Gastrocnemius medialis (tissue), 4 donors: ENCODE measurements at regions of chr22 and their contacts with region 1.

Region 1: GRCh38 chr22:42662114-42663021 is 13.2 kb upstream of the CYB5R3 start:
- DNase-seq: peak; percentile 56 to 75
- ATAC-seq: peak; percentile 88 to 97
- H3K4me3 ChIP-seq: peak overlapping the region; percentile 45 to 68 (median 60)
- H3K27ac ChIP-seq: peak overlapping the region in 2 of 4 donors; percentile 41 to 51
- H3K4me1 ChIP-seq: peaks cover 6 to 9% of the 10 kb centered on the region in 2 donors
- H3K27me3 ChIP-seq: no peaks in the 10 kb centered on the region
- CTCF ChIP-seq: peak; percentile 70 to 94 (median 86)
- POLR2A ChIP-seq: no peak

Region 2: DNA sequence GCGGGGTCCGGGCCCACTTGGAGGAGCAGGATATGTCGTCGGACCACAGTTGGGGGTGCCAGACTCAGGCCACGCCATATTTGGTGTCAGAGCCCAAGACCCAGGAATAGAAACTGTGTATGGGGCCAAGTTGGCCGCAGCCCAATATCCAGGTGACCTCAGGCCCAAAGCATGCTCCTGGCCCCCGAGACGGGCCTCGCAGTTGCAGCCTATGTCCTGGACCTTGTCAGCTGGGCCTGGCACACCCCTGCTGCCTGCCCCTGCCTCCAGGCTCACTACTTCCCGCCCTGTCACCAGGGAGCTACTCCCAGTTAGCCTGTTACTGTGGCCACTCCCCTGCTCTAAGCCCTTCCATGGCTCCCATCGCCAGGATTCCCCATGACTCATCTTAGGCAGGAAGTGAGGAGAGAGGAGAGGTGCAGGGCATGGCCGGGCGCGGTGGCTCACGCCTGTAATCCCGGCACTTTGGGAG is 35.2 kb after region 1 on chr22:
- in situ Hi-C with region 1: no loop called
- intact Hi-C with region 1: loop called (anchors 1 kb)
- DNase-seq: peak; percentile 90 to 98
- ATAC-seq: peak; percentile 71 to 73
- H3K4me3 ChIP-seq: no peak overlapping the region
- H3K27ac ChIP-seq: peak overlapping the region; percentile 87 to 98 (median 92)
- H3K4me1 ChIP-seq: peaks cover 57 to 62% of the 10 kb centered on the region in 2 donors
- H3K27me3 ChIP-seq: no peaks in the 10 kb centered on the region
- CTCF ChIP-seq: no peak
- POLR2A ChIP-seq: peak in 1 of 2 donors; percentile 49

Region 3: GRCh38 chr22:42717197-42717928 is 55.0 kb after region 1 on chr22:
- in situ Hi-C with region 1: loop called in 1 of 4 experiments (anchors 10 kb)
- intact Hi-C with region 1: loop called (anchors 2 kb)
- DNase-seq: no peak
- ATAC-seq: no peak
- H3K4me3 ChIP-seq: no peak overlapping the region
- H3K27ac ChIP-seq: peak overlapping the region in 3 of 4 donors; percentile 25 to 89 (median 47)
- H3K4me1 ChIP-seq: peaks cover 14 to 24% of the 10 kb centered on the region in 2 donors
- H3K27me3 ChIP-seq: no peaks in the 10 kb centered on the region
- CTCF ChIP-seq: no peak
- POLR2A ChIP-seq: no peak

Region 4: DNA sequence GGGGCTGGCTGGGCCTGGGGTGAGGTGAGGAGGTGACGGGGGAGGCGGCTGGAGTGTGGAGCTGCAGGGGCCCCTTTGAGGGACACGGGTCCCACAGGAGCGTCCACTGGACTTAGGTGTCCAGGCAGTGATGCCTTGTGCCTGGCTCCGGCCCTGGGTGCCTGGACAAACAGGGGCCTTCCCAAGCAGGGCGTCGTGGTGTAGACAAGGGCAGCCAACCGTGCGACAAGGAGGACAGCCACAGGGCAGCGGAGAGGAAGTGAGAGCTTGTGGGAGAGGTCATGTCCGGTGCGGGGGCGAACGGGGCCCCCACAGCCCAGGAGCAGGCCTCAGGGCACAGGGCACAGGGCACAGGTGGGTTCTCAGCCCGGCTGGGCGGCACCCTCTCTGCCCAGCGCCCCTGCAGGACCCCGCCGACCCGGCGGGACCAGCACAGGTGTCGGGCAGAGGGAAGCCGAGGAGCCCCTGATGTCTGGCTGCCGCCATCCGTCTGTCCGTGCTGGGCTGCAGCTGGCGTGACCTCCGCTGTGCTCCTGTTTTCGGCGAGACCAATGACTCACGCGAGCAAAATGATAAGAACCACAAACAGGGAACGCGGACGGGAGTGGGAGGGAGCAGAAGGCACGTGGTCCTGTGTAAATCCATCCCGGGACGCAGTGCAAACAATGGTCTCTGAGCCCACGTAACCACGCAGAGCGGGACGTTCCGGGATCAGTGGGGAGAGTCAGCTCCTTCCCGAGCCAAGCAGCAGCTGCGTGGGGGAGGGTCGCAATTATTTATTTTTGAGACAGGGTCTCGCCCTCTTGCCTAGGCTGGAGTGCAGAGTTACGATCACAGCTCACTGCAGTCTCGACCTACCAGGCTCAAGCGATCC is 107.4 kb after region 1 on chr22:
- in situ Hi-C with region 1: loop called in 2 of 4 experiments (anchors 10 to 25 kb)
- intact Hi-C with region 1: no loop called
- DNase-seq: no peak
- ATAC-seq: peak; percentile 42 to 68
- H3K4me3 ChIP-seq: peak overlapping the region in 3 of 4 donors; percentile 25 to 38 (median 28)
- H3K27ac ChIP-seq: no peak overlapping the region
- H3K4me1 ChIP-seq: peaks cover 0 to 7% of the 10 kb centered on the region in 2 donors
- H3K27me3 ChIP-seq: no peaks in the 10 kb centered on the region
- CTCF ChIP-seq: no peak
- POLR2A ChIP-seq: no peak